Motor neuron (in vitro differentiated cells): ENCODE measurements at regions of chr7 and their contacts with region 1.

Region 1: GRCh38 chr7:97835296-97836138 is 36.7 kb downstream of the ASNS start:
- ATAC-seq: peak; percentile 53 to 89 (median 73)
- H3K4me3 ChIP-seq: no peak overlapping the region
- H3K27ac ChIP-seq: no peak overlapping the region
- H3K4me1 ChIP-seq: no peaks in the 10 kb centered on the region

Region 2: DNA sequence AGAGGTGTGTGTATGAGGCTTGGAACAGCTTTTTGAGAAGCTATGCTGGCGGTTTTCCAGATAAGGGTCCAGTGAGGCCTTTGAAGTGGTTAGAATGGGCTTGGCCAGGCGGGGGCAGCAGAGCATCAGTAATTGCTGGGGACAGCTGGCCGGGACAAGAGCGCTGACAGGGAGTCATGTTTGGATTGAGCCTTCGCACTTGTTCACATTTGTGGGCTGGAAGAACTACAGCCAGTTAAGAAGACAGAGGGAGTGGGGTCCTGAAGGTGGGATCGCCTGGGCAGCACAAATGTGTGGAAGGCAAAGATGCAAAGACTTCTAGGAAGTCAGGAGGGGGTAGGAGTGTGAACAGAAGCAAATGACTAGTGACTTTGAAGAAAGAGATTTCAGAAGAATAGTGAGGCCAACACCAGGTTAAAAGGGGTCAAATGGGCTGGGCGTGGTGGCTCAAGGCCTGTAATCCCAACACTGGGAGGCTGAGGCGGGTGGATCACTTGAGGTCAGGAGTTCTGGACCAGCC is 730.7 kb before region 1 on chr7:
- in situ Hi-C with region 1: loop called in 8 of 9 experiments (anchors 10 to 25 kb)
- ATAC-seq: peak; percentile 97 to 100 (median 99)
- H3K4me3 ChIP-seq: no peak overlapping the region
- H3K27ac ChIP-seq: no peak overlapping the region
- H3K4me1 ChIP-seq: no peaks in the 10 kb centered on the region

Region 3: DNA sequence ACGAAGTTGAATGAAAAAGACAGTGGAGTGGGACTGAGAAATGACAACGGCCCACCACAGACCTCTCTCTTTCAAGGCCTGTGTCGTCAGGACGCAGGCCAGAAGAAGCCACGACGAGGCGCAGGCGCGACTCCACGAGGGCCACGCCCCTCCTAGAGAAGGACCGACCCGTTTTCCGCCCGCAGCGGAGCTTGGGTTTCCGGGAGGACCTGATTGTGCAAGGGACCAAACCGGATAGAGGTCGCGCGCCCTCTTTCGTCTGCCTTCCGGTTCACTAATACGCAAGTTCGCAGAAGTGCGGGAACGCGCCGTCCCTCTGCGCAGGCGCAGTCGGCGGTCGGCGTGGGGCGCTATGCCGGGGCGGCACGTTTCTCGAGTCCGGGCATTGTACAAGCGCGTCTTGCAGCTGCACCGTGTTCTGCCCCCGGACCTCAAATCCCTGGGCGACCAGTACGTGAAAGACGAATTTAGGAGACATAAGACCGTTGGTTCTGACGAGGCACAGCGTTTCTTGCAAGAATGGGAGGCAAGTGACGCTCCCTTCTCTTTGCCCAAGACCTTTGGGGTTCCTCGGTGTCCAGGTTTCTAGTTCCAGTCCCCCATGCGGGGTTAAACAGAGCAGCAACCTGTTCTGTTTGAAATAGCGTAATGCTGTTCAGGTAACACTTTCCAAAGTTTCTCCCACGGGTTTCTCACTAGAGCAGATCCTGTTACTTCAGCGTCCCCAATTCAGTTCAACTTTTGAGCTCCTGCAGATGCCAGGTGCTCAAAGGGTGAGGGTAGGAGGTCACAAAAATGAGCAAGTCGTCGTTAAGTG is 717.9 kb before region 1 on chr7 and contains the start of gene SDHAF3:
- in situ Hi-C with region 1: loop called in 5 of 9 experiments (anchors 25 kb)
- ATAC-seq: peak; percentile 96 to 99 (median 97)
- H3K4me3 ChIP-seq: peak within 1 kb of the TSS; percentile 58 to 79 (median 68)
- H3K27ac ChIP-seq: peak within 1 kb of the TSS; percentile 83 to 93
- H3K4me1 ChIP-seq: peaks cover 6 to 10% of the 10 kb centered on the region in 2 donors
- total RNA-seq, gene SDHAF3: 14.2 to 48.7 (median 28.8) TPM

Region 4: GRCh38 chr7:97145068-97145467 is 690.4 kb before region 1 on chr7:
- in situ Hi-C with region 1: loop called in 1 of 9 experiments (anchors 10 kb)
- ATAC-seq: no peak
- H3K4me3 ChIP-seq: no peak overlapping the region
- H3K27ac ChIP-seq: no peak overlapping the region
- H3K4me1 ChIP-seq: no peaks in the 10 kb centered on the region

Region 5: GRCh38 chr7:97499204-97499603 is 336.3 kb before region 1 on chr7:
- in situ Hi-C with region 1: loop called in 2 of 9 experiments (anchors 25 kb)
- ATAC-seq: peak in 3 of 8 experiments; percentile 65 to 77 (median 71)
- H3K4me3 ChIP-seq: no peak overlapping the region
- H3K27ac ChIP-seq: no peak overlapping the region
- H3K4me1 ChIP-seq: no peaks in the 10 kb centered on the region

Region 6: GRCh38 chr7:97513326-97513725 is 322.2 kb before region 1 on chr7:
- in situ Hi-C with region 1: loop called in 1 of 9 experiments (anchors 25 kb)
- ATAC-seq: no peak
- H3K4me3 ChIP-seq: no peak overlapping the region
- H3K27ac ChIP-seq: no peak overlapping the region
- H3K4me1 ChIP-seq: peaks cover 0 to 5% of the 10 kb centered on the region in 2 donors